ENCODE measurements at regions of chr7 and their contacts with region 1.

Region 1: GRCh38 chr7:37181550-37181932 is 267.1 kb downstream of the ELMO1 start:
- DNase-seq: no peak
- CTCF ChIP-seq: no peak

Region 2: GRCh38 chr7:36736899-36737211 is 444.7 kb before region 1 on chr7:
- CTCF ChIA-PET with region 1: interaction called, 14 read pairs
- POLR2A ChIA-PET with region 1: no interaction called
- DNase-seq: peak; percentile 36
- CTCF ChIP-seq: no peak

Region 3: GRCh38 chr7:36820527-36821170 is 360.9 kb before region 1 on chr7:
- CTCF ChIA-PET with region 1: no interaction called
- POLR2A ChIA-PET with region 1: no interaction called
- DNase-seq: no peak
- CTCF ChIP-seq: no peak

Region 4: GRCh38 chr7:36979810-36980248 is 201.7 kb before region 1 on chr7:
- CTCF ChIA-PET with region 1: interaction called, 91 read pairs
- POLR2A ChIA-PET with region 1: no interaction called
- DNase-seq: no peak
- CTCF ChIP-seq: no peak

Region 5: GRCh38 chr7:37007268-37007667 is 174.3 kb before region 1 on chr7:
- CTCF ChIA-PET with region 1: interaction called, 11 read pairs
- POLR2A ChIA-PET with region 1: no interaction called
- DNase-seq: no peak
- CTCF ChIP-seq: no peak

Region 6: DNA sequence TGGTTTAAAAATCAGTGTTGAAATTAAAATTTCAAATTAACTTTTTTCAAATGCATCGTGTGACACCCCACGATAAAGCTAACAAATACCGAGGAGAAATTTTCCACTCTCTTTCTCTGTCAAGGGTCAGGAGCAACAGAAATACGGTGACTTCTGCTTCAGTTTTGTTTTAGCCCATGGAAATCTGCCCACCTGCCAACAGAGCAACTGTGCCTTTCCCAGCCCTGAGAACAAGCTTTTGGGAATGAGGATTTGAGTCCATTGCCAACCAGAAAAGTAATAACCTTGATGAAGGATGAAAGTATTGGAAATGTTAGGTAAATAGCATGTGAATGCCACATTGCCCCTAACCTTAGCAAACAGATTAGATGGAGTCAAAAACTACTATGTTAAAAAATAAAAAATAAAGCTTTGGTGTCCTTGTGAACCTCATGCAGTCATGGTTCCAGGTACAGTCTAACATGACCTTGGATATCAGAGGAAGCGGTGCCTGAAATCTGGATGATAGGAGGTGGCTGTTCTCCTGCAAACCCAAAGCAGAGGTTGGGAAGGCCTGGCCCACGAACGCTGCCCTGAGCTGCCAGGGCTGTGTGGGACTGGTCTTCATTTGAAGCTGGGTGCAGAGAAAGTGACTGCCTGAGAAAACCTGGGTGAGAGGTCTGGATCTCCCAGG is 29.7 kb before region 1 on chr7:
- CTCF ChIA-PET with region 1: interaction called, 16 read pairs
- POLR2A ChIA-PET with region 1: no interaction called
- DNase-seq: no peak
- CTCF ChIP-seq: no peak

Region 7: DNA sequence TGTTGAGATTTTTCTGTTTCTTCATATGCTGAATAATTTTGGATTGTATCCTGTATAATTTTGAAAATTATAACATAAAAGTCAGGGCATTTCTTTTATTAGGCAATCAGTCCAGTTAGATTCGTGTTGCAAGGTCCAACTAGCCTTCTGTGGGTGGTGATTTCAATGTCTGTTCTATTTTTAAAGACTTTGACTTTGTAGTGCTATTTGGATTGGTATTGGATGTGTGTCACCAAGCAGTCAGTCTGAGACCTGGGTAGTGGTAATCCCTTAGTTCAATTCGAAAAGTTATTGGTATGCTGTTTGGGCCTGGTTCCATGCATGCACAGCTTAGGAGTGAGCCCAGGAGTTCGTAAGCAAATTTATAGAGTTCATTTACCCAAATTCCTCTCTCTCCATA is 821.1 kb after region 1 on chr7:
- CTCF ChIA-PET with region 1: no interaction called
- POLR2A ChIA-PET with region 1: no interaction called
- DNase-seq: no peak
- CTCF ChIP-seq: no peak

Measured in GM10248 (cell line).